ENCODE measurements at regions of chr2 and their contacts with region 1.

Region 1: GRCh38 chr2:74690571-74690970 is 36.5 kb downstream of the SEMA4F start:
- DNase-seq: peak; percentile 68
- CTCF ChIP-seq: peak; percentile 75

Region 2: DNA sequence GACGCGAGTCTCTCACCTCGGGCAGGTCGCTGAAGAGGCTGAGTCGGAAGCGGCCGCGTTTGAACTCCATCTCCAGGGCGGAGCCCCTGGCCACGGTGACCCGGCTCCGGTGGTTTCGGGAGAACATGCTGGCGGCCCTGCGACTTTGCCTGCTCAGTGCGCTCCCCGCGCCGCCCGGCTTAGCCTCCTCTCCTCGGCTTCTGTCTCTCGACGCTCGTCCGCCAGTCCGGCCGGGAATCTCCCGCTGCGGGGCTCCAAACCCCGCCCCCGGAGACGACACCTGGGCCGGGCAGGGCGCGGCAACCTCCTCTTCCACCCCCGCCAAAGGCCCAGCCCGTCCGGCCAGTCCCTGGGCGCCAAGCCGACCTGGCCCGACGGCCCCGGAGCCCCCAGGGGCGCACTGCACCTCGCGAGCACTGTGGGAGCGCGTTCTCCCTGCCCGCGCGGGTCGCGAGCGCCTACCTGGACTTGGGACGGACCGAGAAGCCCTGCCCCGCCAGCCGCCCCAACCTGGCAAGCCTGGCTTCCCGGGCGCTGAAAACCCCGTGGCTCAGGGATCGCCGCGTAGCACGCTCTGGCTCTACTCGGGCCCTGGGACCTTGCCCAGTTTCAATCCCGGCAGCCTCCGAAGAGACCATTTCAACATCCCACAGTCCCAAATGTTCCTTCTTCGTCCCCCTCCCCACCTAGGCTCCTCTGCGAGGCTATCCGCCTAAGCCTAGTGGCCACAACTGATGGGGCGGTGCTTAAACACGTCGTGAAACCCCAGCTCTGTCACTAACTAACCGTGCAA is 248.7 kb before region 1 on chr2 and contains the start of gene RTKN:
- CTCF ChIA-PET with region 1: no interaction called
- POLR2A ChIA-PET with region 1: no interaction called
- DNase-seq: peak; percentile 66
- CTCF ChIP-seq: no peak

Region 3: GRCh38 chr2:74703373-74703772 is 12.8 kb after region 1 on chr2:
- CTCF ChIA-PET with region 1: interaction called, 12 read pairs
- POLR2A ChIA-PET with region 1: no interaction called
- DNase-seq: no peak
- CTCF ChIP-seq: no peak

Region 4: DNA sequence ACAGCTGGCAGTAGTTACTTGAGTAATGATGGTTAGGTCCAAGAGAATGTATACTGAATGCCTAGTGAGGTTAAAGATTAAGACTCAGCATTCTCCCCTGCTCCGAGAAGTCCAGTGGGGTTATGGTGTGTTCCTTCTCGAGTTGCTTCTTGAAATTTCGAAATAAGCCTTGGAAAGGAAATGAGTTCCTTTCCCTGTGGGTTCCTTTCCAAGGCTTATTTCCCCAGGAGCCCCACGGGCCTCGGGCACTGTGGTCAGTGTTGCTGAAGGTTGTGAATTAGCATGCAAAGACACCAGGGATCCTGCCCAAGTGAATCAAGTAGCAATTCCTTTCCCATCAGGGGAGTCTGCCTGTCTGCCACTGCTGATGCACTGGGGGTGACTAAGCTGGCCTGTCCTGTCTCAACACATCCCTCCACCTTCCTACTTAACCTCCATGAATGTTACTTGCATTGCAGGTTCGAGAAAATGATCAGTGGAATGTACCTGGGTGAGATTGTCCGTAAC is 196.9 kb after region 1 on chr2:
- CTCF ChIA-PET with region 1: interaction called, 11 read pairs
- POLR2A ChIA-PET with region 1: interaction called, 3 read pairs
- DNase-seq: no peak
- CTCF ChIP-seq: no peak

Region 5: GRCh38 chr2:75415101-75415626 is 724.6 kb after region 1 on chr2:
- CTCF ChIA-PET with region 1: no interaction called
- POLR2A ChIA-PET with region 1: no interaction called
- DNase-seq: no peak
- CTCF ChIP-seq: no peak